Activated CD8-positive, alpha-beta T cell treated with anti-CD3 and anti-CD28 coated beads, Interleukin-2, amount 10 ng/mL, durations not matched to agents 7 days and 5 days (primary cell): ENCODE measurements at regions of chr13 and their contacts with region 1.

Region 1: GRCh38 chr13:46168341-46168740 is 13.6 kb downstream of the LCP1 start:
- DNase-seq: no peak
- ATAC-seq: peak; percentile 15
- H3K4me3 Mint-ChIP-seq: peak overlapping the region; percentile 74
- H3K27ac Mint-ChIP-seq: peak overlapping the region; percentile 91
- H3K4me1 Mint-ChIP-seq: peaks cover 93% of the 10 kb centered on the region
- H3K27me3 Mint-ChIP-seq: no peaks in the 10 kb centered on the region

Region 2: DNA sequence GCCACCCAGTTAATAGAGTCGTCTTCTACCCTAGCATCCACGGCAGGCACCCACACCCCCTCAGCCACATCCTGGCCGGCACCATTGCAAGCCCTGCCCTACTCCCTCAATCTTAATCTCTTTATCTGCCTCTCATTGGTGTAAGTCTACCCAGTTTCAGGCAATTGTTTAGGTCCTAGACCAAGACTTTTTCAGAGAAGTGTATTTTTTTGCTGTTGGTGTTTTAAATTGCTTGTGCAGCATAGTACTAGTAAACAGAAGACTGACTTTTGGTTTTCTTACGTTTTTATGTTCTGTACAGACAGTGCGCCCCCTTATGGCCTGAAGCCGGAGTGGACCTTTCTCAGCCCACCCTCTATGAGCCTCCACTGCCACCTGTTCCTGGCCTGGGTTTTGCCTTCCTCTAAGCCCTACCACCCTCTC is 15.9 kb after region 1 on chr13:
- CTCF ChIA-PET with region 1: interaction called, 22 read pairs
- POLR2A ChIA-PET with region 1: interaction called, 172 read pairs
- DNase-seq: peak; percentile 89
- ATAC-seq: peak; percentile 66
- H3K4me3 Mint-ChIP-seq: peak overlapping the region; percentile 90
- H3K27ac Mint-ChIP-seq: peak overlapping the region; percentile 98
- H3K4me1 Mint-ChIP-seq: peaks cover 38% of the 10 kb centered on the region
- H3K27me3 Mint-ChIP-seq: no peaks in the 10 kb centered on the region

Region 3: DNA sequence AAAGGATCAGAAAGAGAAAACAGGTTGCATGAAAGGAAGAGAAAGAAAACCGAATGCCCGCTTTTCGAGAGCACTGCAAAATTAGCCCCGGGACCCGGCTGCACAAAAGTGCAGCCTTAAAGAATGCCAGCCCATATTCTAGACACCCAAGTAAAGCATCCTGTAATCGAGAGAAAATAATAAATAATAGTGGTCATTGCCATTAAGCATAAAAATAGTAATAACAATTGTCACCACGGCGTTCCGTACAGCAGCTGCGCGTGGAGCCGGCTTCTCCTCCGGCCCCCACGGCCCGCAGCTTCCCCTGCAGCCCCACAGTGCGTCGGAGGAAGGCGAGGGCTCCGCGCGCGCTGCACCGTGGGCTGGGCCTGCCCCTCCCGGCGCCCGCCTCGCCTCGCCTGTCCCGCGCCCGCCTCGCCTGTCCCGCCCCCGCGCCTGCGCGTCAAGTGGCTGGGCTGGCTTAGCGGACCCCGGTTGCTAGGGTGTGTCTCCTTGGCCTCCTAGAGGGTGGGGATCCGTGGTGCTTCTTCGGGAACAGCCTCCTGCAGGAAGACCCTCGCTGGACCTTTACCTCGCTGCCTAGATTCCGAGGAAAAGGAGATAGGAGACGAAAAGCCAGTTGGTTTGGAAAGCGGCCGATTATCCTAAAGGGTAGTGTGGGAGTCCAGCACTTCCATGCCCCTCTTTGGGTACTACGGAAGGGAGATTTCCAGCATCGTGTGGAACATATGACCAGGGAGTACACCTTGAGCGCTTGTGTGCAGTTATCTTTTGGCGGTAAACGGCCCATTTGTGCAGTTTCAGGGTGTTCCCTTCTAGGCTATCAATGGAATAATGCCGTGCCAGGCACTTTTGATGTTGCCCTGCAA is 43.4 kb after region 1 on chr13 and contains the start of gene LRRC63:
- CTCF ChIA-PET with region 1: interaction called, 12 read pairs
- POLR2A ChIA-PET with region 1: interaction called, 13 read pairs
- DNase-seq: peak; percentile 90
- ATAC-seq: peak; percentile 99
- H3K4me3 Mint-ChIP-seq: peak within 1 kb of the TSS; percentile 88
- H3K27ac Mint-ChIP-seq: peak within 1 kb of the TSS; percentile 93
- H3K4me1 Mint-ChIP-seq: peaks cover 41% of the 10 kb centered on the region
- H3K27me3 Mint-ChIP-seq: no peaks in the 10 kb centered on the region
- total RNA-seq, gene LRRC63: 1.7 to 2.2 TPM

Region 4: DNA sequence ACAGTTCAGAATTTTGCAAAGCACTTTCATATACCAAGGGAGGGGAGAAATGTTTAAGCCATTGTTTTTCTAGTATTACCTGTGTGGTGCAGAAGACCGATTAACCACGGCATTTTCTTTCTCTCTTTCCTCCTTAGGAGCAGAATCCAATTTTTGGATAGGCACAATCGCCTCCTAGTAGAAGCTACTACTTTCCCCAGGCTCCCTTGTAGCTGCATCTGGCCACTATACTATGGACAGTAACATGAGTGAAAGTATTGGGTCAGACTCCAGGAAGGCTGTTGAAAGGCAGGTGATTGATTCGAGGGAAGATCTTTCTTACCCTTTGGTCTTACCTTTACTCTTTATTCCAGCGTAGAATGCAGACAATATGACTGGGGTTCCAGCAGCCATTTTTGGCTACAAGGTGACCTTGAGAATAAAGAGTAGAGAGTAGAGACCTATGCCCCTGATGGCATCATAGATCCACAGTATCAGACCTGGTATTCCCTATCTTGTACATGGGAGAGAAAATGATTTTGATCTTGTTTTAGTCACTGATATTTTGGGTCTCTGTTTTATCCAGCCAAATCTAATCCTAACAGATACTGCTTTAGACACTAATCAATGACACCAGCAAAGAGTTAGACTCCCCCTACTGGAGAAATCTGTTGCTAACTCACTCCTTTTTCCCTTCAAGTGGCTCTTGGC is 120.4 kb after region 1 on chr13:
- CTCF ChIA-PET with region 1: interaction called, 30 read pairs
- POLR2A ChIA-PET with region 1: no interaction called
- DNase-seq: peak; percentile 50
- ATAC-seq: peak; percentile 88
- H3K4me3 Mint-ChIP-seq: no peak overlapping the region
- H3K27ac Mint-ChIP-seq: peak overlapping the region; percentile 51
- H3K4me1 Mint-ChIP-seq: peaks cover 19% of the 10 kb centered on the region
- H3K27me3 Mint-ChIP-seq: no peaks in the 10 kb centered on the region

Region 5: GRCh38 chr13:46295491-46296114 is 127.3 kb after region 1 on chr13:
- CTCF ChIA-PET with region 1: interaction called, 30 read pairs
- POLR2A ChIA-PET with region 1: interaction called, 7 read pairs
- DNase-seq: peak; percentile 83
- ATAC-seq: peak; percentile 92
- H3K4me3 Mint-ChIP-seq: peak overlapping the region; percentile 68
- H3K27ac Mint-ChIP-seq: peak overlapping the region; percentile 98
- H3K4me1 Mint-ChIP-seq: peaks cover 46% of the 10 kb centered on the region
- H3K27me3 Mint-ChIP-seq: no peaks in the 10 kb centered on the region